OCI-LY7 (cell line): ENCODE measurements at regions of chr3 and their contacts with region 1.

Region 1: GRCh38 chr3:23389089-23389488 is 186.0 kb downstream of the UBE2E2 start:
- DNase-seq: peak; percentile 83
- H3K4me3 ChIP-seq: peak overlapping the region; percentile 89
- H3K27ac ChIP-seq: peak overlapping the region; percentile 99
- H3K4me1 ChIP-seq: peaks cover 60% of the 10 kb centered on the region
- CTCF ChIP-seq: no peak

Region 2: DNA sequence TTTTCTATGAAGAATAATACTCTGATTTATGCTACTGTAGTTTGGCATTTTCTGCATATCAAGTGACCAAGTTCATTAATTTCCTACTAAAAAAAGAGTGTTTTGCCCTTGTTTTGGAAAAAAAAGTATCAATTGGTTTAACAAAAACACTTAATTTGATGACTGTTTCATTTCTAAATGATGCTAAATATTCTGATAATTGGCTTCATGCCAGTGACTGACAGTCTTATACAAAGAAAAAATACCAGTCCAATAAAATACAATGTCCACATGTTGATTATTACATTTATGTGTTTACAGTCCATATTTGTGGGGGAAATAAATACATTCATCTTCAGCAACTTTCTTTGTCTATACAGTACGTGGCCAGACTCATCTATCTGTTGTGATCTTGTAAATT is 711.6 kb before region 1 on chr3:
- CTCF ChIA-PET with region 1: no interaction called
- POLR2A ChIA-PET with region 1: no interaction called
- intact Hi-C with region 1: no loop called
- DNase-seq: no peak
- H3K4me3 ChIP-seq: no peak overlapping the region
- H3K27ac ChIP-seq: no peak overlapping the region
- H3K4me1 ChIP-seq: no peaks in the 10 kb centered on the region
- CTCF ChIP-seq: no peak

Region 3: GRCh38 chr3:23324745-23325144 is 64.3 kb before region 1 on chr3:
- CTCF ChIA-PET with region 1: no interaction called
- POLR2A ChIA-PET with region 1: interaction called, 11 read pairs
- intact Hi-C with region 1: loop called (anchors 5 kb)
- DNase-seq: peak; percentile 73
- H3K4me3 ChIP-seq: peak overlapping the region; percentile 49
- H3K27ac ChIP-seq: peak overlapping the region; percentile 80
- H3K4me1 ChIP-seq: peaks cover 43% of the 10 kb centered on the region
- CTCF ChIP-seq: no peak

Region 4: DNA sequence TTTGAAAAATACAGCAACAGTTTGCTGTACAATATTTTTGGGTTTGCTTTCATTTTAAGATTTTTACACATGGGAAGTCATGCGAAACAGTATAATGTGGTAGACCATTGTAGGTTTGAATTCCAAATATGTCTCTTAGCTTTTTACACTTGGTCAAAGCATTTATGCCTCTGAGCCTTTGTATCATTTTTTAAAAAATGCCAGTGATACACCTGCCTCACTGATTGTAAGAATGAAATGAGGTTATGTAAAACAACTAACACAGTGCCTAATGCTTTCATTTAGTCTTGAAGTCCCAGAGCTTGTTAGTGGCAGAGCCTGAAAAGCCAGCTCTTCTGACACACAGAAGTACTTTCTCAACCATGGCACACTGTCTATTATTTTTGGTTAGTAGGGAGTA is 16.0 kb after region 1 on chr3:
- CTCF ChIA-PET with region 1: interaction called, 4 read pairs
- POLR2A ChIA-PET with region 1: interaction called, 130 read pairs
- intact Hi-C with region 1: no loop called
- DNase-seq: peak; percentile 77
- H3K4me3 ChIP-seq: peak overlapping the region; percentile 56
- H3K27ac ChIP-seq: peak overlapping the region; percentile 91
- H3K4me1 ChIP-seq: peaks cover 91% of the 10 kb centered on the region
- CTCF ChIP-seq: no peak

Region 5: DNA sequence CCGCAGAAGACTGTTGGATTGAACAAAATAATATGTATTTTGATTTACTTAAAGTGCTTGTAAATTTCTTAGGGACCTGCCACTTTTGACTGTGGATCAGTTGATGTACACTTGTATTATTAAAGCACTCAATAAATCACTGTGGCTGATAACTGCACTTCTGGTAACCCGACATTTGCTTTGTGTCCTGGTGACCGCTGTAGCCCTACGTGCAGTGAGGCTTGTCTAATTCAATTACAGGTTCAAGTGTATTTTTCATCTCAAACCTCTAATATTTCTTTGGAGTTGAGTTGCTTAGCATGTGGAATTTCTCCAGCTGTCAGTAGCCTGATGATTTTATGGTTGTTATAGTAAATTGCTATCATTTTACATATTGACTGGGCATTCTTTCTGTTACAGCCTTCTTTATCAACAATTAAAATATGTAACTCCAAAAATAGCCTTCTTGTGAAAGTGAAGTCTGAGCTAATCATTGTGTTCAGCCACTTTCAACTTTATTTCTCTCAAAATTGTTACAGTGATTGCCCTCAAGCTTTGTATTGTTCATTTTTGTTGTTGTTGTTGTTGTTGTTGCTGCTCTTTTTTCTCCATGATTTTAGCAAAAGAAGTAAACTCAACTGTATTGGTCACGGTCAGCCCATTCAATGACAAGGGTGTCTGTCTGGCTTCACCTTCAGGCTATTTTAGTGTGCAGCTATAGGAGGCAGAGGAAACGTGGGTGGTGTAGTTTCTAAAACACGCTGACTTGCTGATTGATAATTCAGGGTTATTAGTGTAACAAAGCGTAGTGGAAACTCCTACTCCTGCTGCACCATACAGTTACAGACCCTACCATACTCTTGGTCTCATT is 201.6 kb after region 1 on chr3:
- CTCF ChIA-PET with region 1: no interaction called
- POLR2A ChIA-PET with region 1: interaction called, 32 read pairs
- intact Hi-C with region 1: loop called (anchors 1 kb)
- DNase-seq: peak; percentile 60
- H3K4me3 ChIP-seq: peak overlapping the region; percentile 23
- H3K27ac ChIP-seq: peak overlapping the region; percentile 95
- H3K4me1 ChIP-seq: peaks cover 83% of the 10 kb centered on the region
- CTCF ChIP-seq: no peak

Region 6: GRCh38 chr3:23761440-23761896 is 372.4 kb after region 1 on chr3:
- CTCF ChIA-PET with region 1: no interaction called
- POLR2A ChIA-PET with region 1: interaction called, 20 read pairs
- intact Hi-C with region 1: loop called (anchors 1 kb)
- DNase-seq: peak; percentile 79
- H3K4me3 ChIP-seq: peak overlapping the region; percentile 42
- H3K27ac ChIP-seq: peak overlapping the region; percentile 92
- H3K4me1 ChIP-seq: peaks cover 66% of the 10 kb centered on the region
- CTCF ChIP-seq: peak; percentile 75

Region 7: DNA sequence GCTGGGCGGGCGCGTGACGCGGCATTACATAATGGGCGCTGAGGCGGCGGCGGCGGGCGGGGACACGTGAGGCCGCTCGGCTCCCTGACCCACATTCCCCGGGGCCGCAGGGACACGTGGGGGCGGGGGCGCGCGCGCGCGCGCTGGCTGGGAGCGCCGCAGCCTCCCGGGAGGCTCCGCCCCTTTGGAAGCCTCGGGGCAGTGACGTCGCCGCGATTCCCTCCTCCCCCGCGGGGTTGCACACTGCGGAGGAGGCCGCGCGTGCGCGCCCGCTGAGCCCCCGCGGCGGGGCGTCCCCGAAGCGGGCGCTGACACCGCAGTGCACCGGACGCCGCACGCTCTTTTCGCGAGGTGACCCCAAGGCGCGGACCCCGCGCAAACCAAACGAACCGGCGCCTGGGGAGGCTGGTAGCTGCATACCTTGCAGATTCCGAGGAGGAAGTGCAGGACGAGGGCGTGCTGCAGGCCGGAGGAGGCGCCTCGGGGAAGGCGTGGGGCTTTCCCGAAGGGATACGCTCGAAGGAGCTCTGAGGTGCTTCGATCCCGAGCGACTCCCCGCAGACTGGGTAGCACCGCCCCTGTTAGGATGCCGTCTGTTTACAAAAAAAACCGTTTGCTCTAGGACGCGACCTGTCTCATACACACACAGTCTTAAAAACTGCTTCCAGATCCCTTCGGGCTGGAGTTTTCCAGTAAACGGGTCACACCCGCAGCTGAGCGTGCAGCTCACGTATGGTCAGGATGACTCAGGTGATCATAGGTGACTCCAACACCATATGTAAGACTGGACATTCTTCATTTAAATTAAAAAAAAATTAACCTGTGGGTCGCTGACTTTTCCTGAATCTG is 557.0 kb after region 1 on chr3:
- CTCF ChIA-PET with region 1: no interaction called
- POLR2A ChIA-PET with region 1: interaction called, 3 read pairs
- intact Hi-C with region 1: loop called (anchors 5 kb)
- DNase-seq: peak; percentile 95
- H3K4me3 ChIP-seq: peak overlapping the region; percentile 72
- H3K27ac ChIP-seq: peak overlapping the region; percentile 54
- H3K4me1 ChIP-seq: peaks cover 38% of the 10 kb centered on the region
- CTCF ChIP-seq: no peak